Uterus (tissue), 4 donors: ENCODE measurements at regions of chr7 and their contacts with region 1.

Region 1: DNA sequence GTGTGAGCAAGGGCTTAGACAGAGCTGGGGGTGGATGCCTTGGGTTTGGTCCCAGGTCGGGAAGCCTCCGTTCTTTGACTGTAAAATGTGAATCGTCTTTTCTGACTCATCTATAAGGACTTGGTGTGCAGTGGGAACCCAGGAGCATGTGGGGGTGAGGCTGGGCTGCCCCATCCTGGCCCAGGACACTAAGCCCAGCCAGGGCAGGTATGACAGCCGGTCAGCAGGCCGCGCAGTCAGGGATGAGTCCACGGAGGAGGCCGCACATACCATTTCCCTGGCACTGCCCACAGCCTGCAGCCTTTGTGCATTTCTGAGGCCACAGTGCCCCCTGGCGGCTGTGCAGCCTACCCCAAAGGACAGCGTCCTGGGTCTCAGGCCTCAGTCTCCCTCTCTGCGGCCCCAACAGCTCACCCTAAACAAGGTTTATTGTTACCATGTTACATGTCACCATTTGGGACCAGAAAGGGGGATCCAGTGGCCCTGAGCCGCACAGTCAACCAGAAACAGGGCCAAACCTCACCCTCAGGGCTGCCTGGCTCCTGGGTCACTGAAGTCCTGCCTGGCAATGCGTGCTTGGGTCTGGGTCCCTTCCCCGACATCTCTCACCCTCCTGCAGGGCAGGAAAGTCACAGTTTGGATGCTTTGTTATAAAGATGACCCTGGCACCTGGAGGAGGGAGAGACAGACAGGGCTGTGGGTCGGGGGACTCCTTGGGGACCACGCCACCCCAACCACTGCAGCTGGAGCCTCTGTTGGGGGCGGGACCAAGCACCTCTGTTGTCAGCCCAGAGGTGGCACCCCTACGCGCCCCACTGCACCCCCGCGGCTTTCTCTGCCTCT is 14.4 kb upstream of the SH2B2 start:
- DNase-seq: peak; percentile 78
- H3K4me3 ChIP-seq: no peak overlapping the region
- H3K27ac ChIP-seq: no peak overlapping the region
- H3K4me1 ChIP-seq: no peaks in the 10 kb centered on the region
- H3K27me3 ChIP-seq: no peaks in the 10 kb centered on the region
- CTCF ChIP-seq: peak; percentile 81 to 94 (median 90)
- POLR2A ChIP-seq: no peak

Region 2: DNA sequence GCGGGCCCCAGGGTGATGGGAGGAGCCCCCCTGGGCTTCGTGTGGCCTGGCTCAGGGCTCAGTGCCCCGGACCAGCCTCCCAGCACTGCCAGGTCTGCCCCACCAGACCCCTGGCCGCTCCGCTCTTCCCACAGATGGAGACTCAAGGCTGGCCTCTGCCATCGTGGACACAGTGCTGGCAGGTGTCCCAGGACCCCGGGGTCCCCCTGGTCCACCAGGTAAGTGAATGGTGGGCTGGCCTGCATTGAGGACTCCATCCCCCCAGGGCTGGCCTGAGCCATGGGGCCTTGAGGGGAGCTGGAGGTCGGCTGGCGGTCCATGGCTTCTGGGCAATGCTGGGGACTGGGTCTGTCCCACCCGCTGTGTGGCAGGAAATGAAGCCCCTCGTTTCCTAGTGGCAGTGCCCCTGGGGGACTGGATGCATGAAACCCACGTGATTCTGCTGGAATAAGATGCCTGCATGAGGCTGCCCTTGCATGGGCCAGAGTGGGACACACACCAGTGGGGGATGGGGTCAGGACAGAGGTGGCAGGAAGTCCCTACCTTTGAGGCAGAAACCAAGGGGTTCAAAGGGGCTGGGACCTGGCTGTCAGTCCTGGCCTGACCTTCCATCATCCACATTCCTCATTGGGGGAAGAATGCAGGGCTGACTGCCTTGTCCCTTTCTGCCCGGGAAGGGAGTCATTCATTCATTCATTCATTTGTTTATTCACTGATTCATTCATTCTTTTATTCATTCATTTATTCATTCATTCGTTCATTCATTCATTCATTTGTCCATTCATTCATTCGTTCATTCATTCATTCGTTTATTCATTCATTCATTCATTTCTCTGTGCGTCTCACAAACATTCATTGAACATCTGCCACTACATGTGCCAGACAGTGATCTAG is 725.0 kb before region 1 on chr7:
- intact Hi-C with region 1: loop called (anchors 5 kb)
- DNase-seq: no peak
- H3K4me3 ChIP-seq: no peak overlapping the region
- H3K27ac ChIP-seq: no peak overlapping the region
- H3K4me1 ChIP-seq: no peaks in the 10 kb centered on the region
- H3K27me3 ChIP-seq: no peaks in the 10 kb centered on the region
- CTCF ChIP-seq: no peak
- POLR2A ChIP-seq: no peak

Region 3: GRCh38 chr7:101688183-101688831 is 584.0 kb before region 1 on chr7:
- intact Hi-C with region 1: loop called (anchors 5 kb)
- DNase-seq: peak; percentile 78 to 85
- H3K4me3 ChIP-seq: peak overlapping the region in 1 of 2 donors; percentile 8
- H3K27ac ChIP-seq: peak overlapping the region in 1 of 2 donors; percentile 2
- H3K4me1 ChIP-seq: peaks cover 0 to 5% of the 10 kb centered on the region in 2 donors
- H3K27me3 ChIP-seq: no peaks in the 10 kb centered on the region
- CTCF ChIP-seq: peak; percentile 92 to 97 (median 95)
- POLR2A ChIP-seq: peak in 1 of 2 donors; percentile 26